ENCODE measurements at regions of chr17 and their contacts with region 1.

Region 1: DNA sequence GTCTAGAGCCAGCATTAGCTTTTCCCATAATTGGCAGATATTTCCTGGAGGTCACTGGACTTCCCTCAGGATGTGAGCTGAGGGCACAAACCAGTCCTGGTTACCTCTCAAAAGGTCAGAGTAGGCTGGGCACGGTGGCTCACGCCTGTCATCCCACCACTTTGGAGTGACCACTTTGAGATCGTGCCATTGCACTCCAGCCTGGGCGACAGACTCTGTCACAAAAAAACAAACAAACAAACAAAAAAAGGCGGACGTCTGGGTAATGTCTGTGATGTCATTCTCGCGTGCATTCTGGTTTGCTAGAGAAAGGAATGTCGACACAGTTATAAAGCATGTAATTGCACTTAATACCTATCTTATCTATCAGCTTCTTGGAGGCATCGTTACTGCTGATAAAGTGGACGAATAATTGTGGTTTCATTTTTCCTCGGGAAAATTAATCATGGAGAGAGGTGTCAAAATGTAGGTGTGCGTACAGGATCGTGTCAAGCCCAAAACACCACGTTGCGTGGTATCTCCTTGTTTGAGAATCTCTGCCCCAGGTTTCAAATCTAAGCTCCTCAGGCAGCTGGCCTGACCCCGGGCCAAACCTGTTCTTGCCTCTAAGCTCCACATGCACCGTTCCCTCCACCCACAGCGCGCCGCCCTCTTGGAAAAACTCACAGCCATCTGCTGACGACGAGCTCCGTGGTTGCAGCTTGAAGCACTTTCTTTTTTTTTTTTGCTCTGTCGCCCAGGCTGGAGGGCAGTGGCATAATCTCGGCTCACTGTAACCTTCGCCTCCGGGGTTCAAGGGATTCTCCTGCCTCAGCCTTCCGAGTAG is 6.5 kb upstream of the CRK start:
- H3K4me3 ChIP-seq: no peak overlapping the region; the same call in 1 of the 2 replicates
- H3K27ac ChIP-seq: peak overlapping the region; percentile 62
- H3K4me1 ChIP-seq: peaks cover 4% of the 10 kb centered on the region
- CTCF ChIP-seq: peak; percentile 41

Region 2: DNA sequence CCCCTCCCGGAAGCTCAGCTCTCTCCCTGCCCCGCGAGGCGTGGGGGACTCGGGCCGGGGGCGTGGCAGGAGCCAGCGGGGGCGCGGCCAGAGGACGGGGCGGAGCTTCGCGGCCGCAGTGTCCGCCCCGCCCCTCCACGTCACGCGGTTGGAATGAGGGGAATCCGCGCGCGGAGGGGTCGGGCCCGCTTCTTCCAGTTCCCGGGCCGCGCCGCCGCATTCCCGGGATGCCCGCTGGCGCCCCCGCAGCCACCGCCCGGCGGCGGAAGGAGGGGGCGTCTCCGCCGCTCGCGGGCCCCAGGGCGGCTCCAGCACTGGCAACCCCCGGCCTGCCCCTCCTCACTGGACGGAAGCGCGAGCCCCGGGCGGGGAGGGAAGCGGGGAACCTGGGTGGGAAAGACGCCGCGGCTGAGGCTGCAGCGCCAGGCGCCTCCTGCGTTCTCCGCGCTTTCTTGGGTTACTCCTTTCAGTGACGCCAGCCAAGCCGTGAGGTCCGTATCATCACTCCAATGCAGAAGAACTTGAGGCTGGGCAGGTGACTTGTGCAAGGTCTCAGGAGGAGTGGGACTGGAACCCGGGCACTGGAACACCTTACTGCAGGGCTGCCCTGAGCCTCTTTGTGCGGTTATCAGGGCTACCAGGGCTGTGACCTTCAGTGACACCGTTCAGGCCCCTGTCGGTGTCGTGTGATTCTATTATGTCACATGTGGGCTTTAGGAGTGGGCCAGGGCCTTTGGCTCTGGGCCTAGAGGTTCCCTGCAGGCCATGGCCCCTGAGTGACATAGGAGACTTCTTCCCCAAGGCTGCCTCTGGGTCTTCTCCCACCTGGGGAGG is 25.7 kb after region 1 on chr17:
- CTCF ChIA-PET with region 1: interaction called, 3 read pairs
- POLR2A ChIA-PET with region 1: interaction called, 12 read pairs
- H3K4me3 ChIP-seq: peak overlapping the region; percentile 45
- H3K27ac ChIP-seq: peak overlapping the region; percentile 70; the same call in 1 of the 2 replicates
- H3K4me1 ChIP-seq: peaks cover 6% of the 10 kb centered on the region; the same call in 1 of the 2 replicates
- CTCF ChIP-seq: peak; percentile 37; the same call in 1 of the 2 replicates